Activated B cell treated with CpG ODN at 0.5 μM for 24 hours (primary cell): ENCODE measurements at regions of chr12 and their contacts with region 1.

Region 1: GRCh38 chr12:40107098-40107802 is 1.4 kb upstream of the SLC2A13 start:
- DNase-seq: peak; percentile 76
- ATAC-seq: peak; percentile 45
- H3K4me3 Mint-ChIP-seq: peak overlapping the region; percentile 87
- H3K27ac Mint-ChIP-seq: peak overlapping the region; percentile 73
- H3K4me1 Mint-ChIP-seq: peaks cover 45% of the 10 kb centered on the region
- H3K27me3 Mint-ChIP-seq: no peaks in the 10 kb centered on the region
- CTCF ChIP-seq: no peak

Region 2: GRCh38 chr12:39587225-39587624 is 520.0 kb before region 1 on chr12:
- CTCF ChIA-PET with region 1: no interaction called
- POLR2A ChIA-PET with region 1: no interaction called
- intact Hi-C with region 1: loop called (anchors 1 kb)
- DNase-seq: no peak
- ATAC-seq: peak; percentile 62
- H3K4me3 Mint-ChIP-seq: no peak overlapping the region
- H3K27ac Mint-ChIP-seq: no peak overlapping the region
- H3K4me1 Mint-ChIP-seq: peaks cover 2% of the 10 kb centered on the region
- H3K27me3 Mint-ChIP-seq: no peaks in the 10 kb centered on the region
- CTCF ChIP-seq: no peak

Region 3: DNA sequence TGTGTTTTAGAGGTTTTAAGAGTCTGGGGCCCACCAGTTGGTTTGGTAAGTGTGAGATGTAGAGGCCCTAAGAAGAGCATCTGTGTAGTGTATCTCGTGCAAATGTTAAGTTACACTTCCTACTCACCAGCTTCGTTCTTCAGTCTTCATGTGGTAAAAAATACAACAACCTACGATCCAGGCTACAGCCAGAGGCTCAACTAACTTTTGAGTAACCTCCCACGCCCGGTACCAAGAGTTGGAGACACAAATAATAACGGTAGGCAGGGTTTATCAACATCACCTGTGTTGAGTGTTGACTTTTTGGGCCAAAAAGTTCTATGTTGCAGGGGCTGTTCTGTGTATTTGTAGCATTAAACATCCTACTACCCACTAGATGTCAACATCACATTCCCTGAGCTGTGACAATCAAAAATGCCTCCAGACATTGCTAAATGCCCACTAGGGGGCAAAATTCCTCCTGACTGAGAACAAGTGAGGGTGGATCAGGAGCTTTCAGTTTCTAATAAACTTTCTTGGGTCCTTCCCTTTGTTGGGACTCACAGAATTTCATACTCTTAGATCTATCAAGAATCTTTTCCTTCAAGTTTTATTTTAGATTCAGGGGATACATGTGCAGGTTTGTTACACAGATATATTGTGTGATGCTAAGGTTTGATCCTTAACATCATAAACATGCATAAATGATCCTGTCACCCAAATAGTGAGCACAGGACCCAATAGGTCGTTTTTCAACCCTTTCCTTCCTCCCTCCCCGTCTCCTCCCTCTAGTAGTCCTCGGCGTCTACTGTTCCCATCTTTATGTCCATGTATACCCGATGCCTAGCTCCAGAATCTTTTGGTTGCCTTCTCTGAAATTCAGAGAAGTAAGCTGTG is 96.1 kb before region 1 on chr12:
- CTCF ChIA-PET with region 1: interaction called, 58 read pairs
- POLR2A ChIA-PET with region 1: interaction called, 9 read pairs
- intact Hi-C with region 1: loop called (anchors 1 kb)
- DNase-seq: no peak
- ATAC-seq: peak; percentile 84
- H3K4me3 Mint-ChIP-seq: peak overlapping the region; percentile 68
- H3K27ac Mint-ChIP-seq: peak overlapping the region; percentile 20
- H3K4me1 Mint-ChIP-seq: peaks cover 17% of the 10 kb centered on the region
- H3K27me3 Mint-ChIP-seq: no peaks in the 10 kb centered on the region
- CTCF ChIP-seq: peak; percentile 28

Region 4: DNA sequence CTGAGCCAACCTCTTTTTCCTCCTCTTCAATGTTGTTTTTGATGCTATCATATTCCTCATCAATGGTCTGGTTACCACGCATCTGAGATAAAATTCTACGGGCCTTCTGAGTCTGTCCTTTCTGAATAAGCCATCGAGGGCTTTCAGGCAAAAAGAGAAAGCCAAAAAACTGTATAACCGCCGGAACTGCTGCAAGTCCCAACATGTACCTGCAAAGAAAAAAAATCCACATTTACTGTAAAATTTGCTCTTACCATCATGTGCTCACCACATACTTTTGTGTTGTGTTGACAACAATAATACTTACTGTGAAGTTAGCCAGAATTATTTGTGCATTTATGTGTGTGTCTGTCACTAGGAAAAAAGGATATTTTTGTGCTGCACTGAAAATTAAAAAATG is 78.9 kb before region 1 on chr12:
- CTCF ChIA-PET with region 1: no interaction called
- POLR2A ChIA-PET with region 1: no interaction called
- intact Hi-C with region 1: no loop called
- DNase-seq: no peak
- ATAC-seq: no peak
- H3K4me3 Mint-ChIP-seq: no peak overlapping the region
- H3K27ac Mint-ChIP-seq: no peak overlapping the region
- H3K4me1 Mint-ChIP-seq: peaks cover 18% of the 10 kb centered on the region
- H3K27me3 Mint-ChIP-seq: no peaks in the 10 kb centered on the region
- CTCF ChIP-seq: no peak

Region 5: GRCh38 chr12:40158592-40159111 is 51.4 kb after region 1 on chr12:
- CTCF ChIA-PET with region 1: no interaction called
- POLR2A ChIA-PET with region 1: interaction called, 4 read pairs
- intact Hi-C with region 1: loop called (anchors 2 kb)
- DNase-seq: no peak
- ATAC-seq: peak; percentile 76
- H3K4me3 Mint-ChIP-seq: peak overlapping the region; percentile 69
- H3K27ac Mint-ChIP-seq: peak overlapping the region; percentile 87
- H3K4me1 Mint-ChIP-seq: peaks cover 56% of the 10 kb centered on the region
- H3K27me3 Mint-ChIP-seq: no peaks in the 10 kb centered on the region
- CTCF ChIP-seq: no peak

Region 6: GRCh38 chr12:40261937-40262336 is 154.7 kb after region 1 on chr12:
- CTCF ChIA-PET with region 1: no interaction called
- POLR2A ChIA-PET with region 1: no interaction called
- intact Hi-C with region 1: loop called (anchors 2 kb)
- DNase-seq: no peak
- ATAC-seq: peak; percentile 73
- H3K4me3 Mint-ChIP-seq: peak overlapping the region; percentile 75
- H3K27ac Mint-ChIP-seq: peak overlapping the region; percentile 92
- H3K4me1 Mint-ChIP-seq: peaks cover 41% of the 10 kb centered on the region
- H3K27me3 Mint-ChIP-seq: no peaks in the 10 kb centered on the region
- CTCF ChIP-seq: no peak